Dendritic cell treated with granulocyte-macrophage colony-stimulating factor and Interleukin-4, amounts not matched to agents 40 ng/mL and 50 ng/mL, for 4 days (primary cell): ENCODE measurements at regions of chr1 and their contacts with region 1.

Region 1: GRCh38 chr1:67500413-67500959 is 70.3 kb upstream of the SERBP1 start:
- H3K4me3 Mint-ChIP-seq: no peak overlapping the region
- H3K27ac Mint-ChIP-seq: no peak overlapping the region
- H3K4me1 Mint-ChIP-seq: peaks cover 4% of the 10 kb centered on the region
- H3K27me3 Mint-ChIP-seq: peaks cover 4% of the 10 kb centered on the region

Region 2: GRCh38 chr1:67230539-67230938 is 269.9 kb before region 1 on chr1:
- intact Hi-C with region 1: loop called (anchors 1 kb)
- H3K4me3 Mint-ChIP-seq: no peak overlapping the region
- H3K27ac Mint-ChIP-seq: no peak overlapping the region
- H3K4me1 Mint-ChIP-seq: peaks cover 5% of the 10 kb centered on the region
- H3K27me3 Mint-ChIP-seq: no peaks in the 10 kb centered on the region

Region 3: DNA sequence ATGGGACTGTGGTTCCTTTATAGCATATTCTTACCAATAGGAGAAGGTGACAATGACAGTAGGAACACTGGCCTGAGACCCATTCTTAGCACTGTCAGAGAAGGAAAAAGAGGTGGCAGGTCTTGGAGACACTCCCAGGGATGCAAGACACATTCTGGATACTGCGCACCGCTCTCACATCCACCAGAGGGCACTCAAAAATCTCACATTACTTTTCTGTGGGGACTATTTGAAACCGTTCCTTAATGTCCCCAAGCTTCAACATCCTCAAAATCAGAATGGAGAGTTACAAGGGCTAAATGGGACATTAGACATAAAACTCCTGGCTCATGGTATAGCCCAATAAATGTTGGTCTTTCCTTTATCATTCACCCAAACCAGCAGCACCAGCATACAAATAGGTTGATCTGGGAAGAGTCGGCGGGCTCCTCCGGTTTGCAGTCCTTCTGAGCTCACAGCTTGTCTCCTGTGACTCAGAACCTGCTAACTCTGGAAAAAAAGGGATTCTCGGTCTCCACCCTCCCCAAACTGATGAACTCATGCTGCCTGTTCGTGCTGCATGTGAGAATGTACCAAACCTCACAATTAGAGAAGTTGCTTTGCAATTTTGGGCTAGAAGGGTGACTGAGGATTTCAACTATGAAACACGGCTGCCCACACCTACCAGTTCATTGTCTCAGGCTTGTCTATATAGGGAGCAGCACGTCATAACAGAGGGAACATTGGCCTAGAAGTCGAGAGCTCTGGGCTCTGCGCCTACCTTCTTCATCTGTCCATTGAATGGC is 152.6 kb before region 1 on chr1:
- intact Hi-C with region 1: loop called (anchors 1 kb)
- H3K4me3 Mint-ChIP-seq: no peak overlapping the region
- H3K27ac Mint-ChIP-seq: no peak overlapping the region
- H3K4me1 Mint-ChIP-seq: no peaks in the 10 kb centered on the region
- H3K27me3 Mint-ChIP-seq: no peaks in the 10 kb centered on the region

Region 4: DNA sequence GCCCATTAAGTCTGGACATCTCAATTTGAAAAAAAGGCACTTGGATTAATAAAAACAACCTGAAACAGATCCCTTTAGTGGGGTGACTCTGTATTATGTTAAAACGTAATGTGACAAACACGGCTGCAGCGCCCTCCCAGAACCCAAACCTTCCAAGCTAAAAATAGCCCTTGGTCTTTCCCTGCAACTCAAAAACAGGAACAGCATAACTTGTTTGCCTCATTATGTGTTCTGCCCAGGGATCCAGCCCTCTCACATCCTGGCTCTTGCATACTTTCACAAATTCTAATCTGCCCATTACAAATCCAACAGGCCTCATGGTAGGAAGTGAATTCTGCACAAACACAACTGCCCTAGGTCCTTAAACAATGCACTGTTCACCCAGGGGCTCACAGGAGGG is 89.8 kb after region 1 on chr1:
- intact Hi-C with region 1: no loop called
- H3K4me3 Mint-ChIP-seq: no peak overlapping the region
- H3K27ac Mint-ChIP-seq: peak overlapping the region; percentile 51
- H3K4me1 Mint-ChIP-seq: peaks cover 63% of the 10 kb centered on the region
- H3K27me3 Mint-ChIP-seq: peaks cover 2% of the 10 kb centered on the region